ENCODE measurements at regions of chrX and their contacts with region 1.

Region 1: GRCh38 chrX:45322382-45322781 is 121.7 kb upstream of the DIPK2B start:
- DNase-seq: peak in 3 of 5 donors; percentile 8 to 25 (median 21)
- ATAC-seq: peak in 1 of 4 donors; percentile 63
- H3K4me3 ChIP-seq: no peak overlapping the region
- H3K27ac ChIP-seq: no peak overlapping the region
- H3K4me1 ChIP-seq: no peaks in the 10 kb centered on the region
- H3K27me3 ChIP-seq: peaks cover 0 to 41% (median 0%) of the 10 kb centered on the region in 9 donors
- CTCF ChIP-seq: peak in 11 of 12 donors; percentile 32 to 54 (median 41)
- POLR2A ChIP-seq: no peak

Region 2: DNA sequence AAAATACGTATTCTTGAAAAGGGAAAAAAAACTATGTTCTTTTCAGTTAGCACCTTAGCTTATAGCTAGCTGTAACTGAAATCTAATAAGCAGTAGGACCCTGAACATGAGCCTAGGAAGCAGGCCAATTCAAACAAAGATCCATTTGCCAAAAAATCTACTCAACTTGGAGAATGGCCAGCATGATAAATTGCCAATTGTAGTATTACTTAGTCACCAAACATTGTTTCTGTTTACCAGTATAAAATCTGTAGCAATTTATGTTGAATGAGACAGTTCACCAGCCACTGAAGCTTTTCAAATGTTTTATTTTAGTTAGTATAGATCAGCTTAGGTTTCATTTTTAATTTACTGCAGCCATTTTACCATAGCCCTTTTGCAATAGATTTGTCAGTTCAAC is 201.9 kb after region 1 on chrX:
- intact Hi-C with region 1: loop called in 3 of 10 experiments (anchors 10 kb)
- DNase-seq: no peak
- ATAC-seq: no peak
- H3K4me3 ChIP-seq: no peak overlapping the region
- H3K27ac ChIP-seq: no peak overlapping the region
- H3K4me1 ChIP-seq: peaks cover 0 to 5% (median 0%) of the 10 kb centered on the region in 12 donors
- H3K27me3 ChIP-seq: peaks cover 0 to 12% (median 0%) of the 10 kb centered on the region in 9 donors
- CTCF ChIP-seq: no peak
- POLR2A ChIP-seq: no peak

Region 3: DNA sequence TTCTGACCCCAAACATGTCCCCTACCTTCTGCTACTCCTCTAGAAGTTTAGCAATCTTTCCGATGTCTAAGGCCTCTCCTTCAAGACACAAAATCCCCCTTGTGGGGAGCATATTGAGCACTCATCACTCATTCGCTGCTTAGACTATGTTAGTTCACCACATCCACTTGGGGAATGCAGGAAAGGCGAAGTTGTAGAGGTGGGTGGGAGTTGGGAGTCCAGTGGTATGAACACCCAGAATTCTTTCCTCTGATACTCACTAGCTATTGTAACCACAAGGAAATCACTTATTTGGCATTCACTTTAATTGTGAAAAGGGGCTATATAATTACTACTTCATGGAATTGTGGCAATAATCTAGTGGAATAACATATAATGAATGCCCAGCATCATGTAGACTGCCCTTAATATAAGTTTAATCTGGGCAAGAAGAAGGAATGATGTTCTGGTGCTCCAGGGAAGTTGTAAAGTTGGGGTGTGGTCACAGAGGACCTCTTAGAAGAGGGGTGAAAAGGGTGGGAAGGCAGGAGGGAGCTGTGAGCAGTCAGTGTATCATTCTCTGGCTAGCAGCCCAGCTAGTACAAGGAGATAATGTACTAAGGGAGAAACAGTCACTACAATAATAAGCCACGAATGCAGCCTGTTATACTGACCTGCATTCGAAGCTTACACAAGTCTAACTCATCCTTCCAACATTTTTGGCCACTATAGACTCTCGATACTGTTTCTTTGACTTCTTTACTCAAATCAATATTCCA is 346.5 kb after region 1 on chrX:
- intact Hi-C with region 1: no loop called
- DNase-seq: no peak
- ATAC-seq: no peak
- H3K4me3 ChIP-seq: no peak overlapping the region
- H3K27ac ChIP-seq: no peak overlapping the region
- H3K4me1 ChIP-seq: no peaks in the 10 kb centered on the region
- H3K27me3 ChIP-seq: peaks cover 0 to 12% (median 0%) of the 10 kb centered on the region in 9 donors
- CTCF ChIP-seq: no peak
- POLR2A ChIP-seq: no peak

Region 4: GRCh38 chrX:45749375-45749774 is 427.0 kb after region 1 on chrX:
- intact Hi-C with region 1: loop called in 4 of 10 experiments (anchors 5 to 10 kb)
- DNase-seq: no peak
- ATAC-seq: peak in 2 of 4 donors; percentile 39 to 55
- H3K4me3 ChIP-seq: peak overlapping the region in 8 of 12 donors; percentile 35 to 49 (median 41)
- H3K27ac ChIP-seq: peak overlapping the region in 11 of 12 donors; percentile 22 to 79 (median 67)
- H3K4me1 ChIP-seq: peaks cover 0 to 23% (median 3%) of the 10 kb centered on the region in 12 donors
- H3K27me3 ChIP-seq: peaks cover 0 to 23% (median 0%) of the 10 kb centered on the region in 9 donors
- CTCF ChIP-seq: peak in 10 of 12 donors; percentile 5 to 48 (median 29)
- POLR2A ChIP-seq: no peak

Region 5: GRCh38 chrX:45849253-45849862 is 527.0 kb after region 1 on chrX:
- intact Hi-C with region 1: loop called in 2 of 10 experiments (anchors 10 kb)
- DNase-seq: no peak
- ATAC-seq: no peak
- H3K4me3 ChIP-seq: peak overlapping the region in 8 of 12 donors; percentile 1 to 57 (median 15)
- H3K27ac ChIP-seq: no peak overlapping the region
- H3K4me1 ChIP-seq: peaks cover 0 to 6% (median 0%) of the 10 kb centered on the region in 12 donors
- H3K27me3 ChIP-seq: peaks cover 0 to 56% (median 0%) of the 10 kb centered on the region in 9 donors
- CTCF ChIP-seq: peak in 7 of 12 donors; percentile 18 to 45 (median 31)
- POLR2A ChIP-seq: no peak

Region 6: DNA sequence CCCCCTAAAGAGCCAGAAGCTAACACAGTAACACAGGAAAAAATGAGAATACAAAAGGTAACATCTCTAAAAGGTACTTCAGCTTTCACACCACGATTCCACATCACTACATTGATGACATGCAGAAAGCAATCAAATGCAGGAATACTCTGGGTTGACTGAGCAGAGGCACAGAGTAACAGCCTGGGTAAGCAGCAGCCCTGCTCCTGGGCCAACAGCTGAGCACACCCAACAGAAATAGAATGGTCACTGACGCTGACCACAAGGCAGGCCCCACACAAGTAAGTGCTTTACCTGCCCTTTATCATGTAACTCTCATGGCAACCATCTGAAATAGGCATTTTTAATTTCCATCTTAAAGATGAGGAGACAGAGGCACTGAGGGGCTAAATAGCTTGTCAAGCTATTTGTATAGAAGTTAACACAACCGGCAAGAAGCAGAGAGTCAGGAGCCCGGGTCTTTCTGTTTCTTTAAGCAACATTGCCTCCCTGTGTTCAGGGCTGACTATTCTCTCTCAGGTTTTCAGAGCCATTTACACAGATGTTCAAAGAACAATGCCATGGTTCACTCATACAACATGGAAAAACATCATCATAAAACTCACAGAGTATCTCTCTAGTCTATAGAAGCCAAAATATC is 1054.0 kb after region 1 on chrX:
- intact Hi-C with region 1: loop called in 3 of 10 experiments (anchors 2 to 10 kb)
- DNase-seq: peak in 1 of 5 donors; percentile 4
- ATAC-seq: peak; percentile 55 to 83 (median 75)
- H3K4me3 ChIP-seq: no peak overlapping the region
- H3K27ac ChIP-seq: no peak overlapping the region
- H3K4me1 ChIP-seq: no peaks in the 10 kb centered on the region
- H3K27me3 ChIP-seq: peaks cover 0 to 19% (median 0%) of the 10 kb centered on the region in 9 donors
- CTCF ChIP-seq: peak in 7 of 12 donors; percentile 20 to 43 (median 28)
- POLR2A ChIP-seq: no peak

Region 7: GRCh38 chrX:46408553-46409407 is 1086.4 kb after region 1 on chrX:
- intact Hi-C with region 1: loop called in 4 of 10 experiments (anchors 10 kb)
- DNase-seq: peak; percentile 37 to 74 (median 54)
- ATAC-seq: no peak
- H3K4me3 ChIP-seq: no peak overlapping the region
- H3K27ac ChIP-seq: no peak overlapping the region
- H3K4me1 ChIP-seq: no peaks in the 10 kb centered on the region
- H3K27me3 ChIP-seq: no peaks in the 10 kb centered on the region
- CTCF ChIP-seq: peak; percentile 56 to 92 (median 76)
- POLR2A ChIP-seq: no peak

Measured in heart left ventricle (tissue), 16 donors.